ENCODE measurements at regions of chr9 and their contacts with region 1.

Region 1: GRCh38 chr9:21395778-21396717 is 10.8 kb upstream of the IFNA2 start:
- DNase-seq: peak; percentile 39
- H3K4me3 ChIP-seq: peak overlapping the region; percentile 40
- H3K27ac ChIP-seq: no peak overlapping the region
- H3K4me1 ChIP-seq: no peaks in the 10 kb centered on the region
- H3K27me3 ChIP-seq: no peaks in the 10 kb centered on the region
- CTCF ChIP-seq: peak; percentile 75

Region 2: DNA sequence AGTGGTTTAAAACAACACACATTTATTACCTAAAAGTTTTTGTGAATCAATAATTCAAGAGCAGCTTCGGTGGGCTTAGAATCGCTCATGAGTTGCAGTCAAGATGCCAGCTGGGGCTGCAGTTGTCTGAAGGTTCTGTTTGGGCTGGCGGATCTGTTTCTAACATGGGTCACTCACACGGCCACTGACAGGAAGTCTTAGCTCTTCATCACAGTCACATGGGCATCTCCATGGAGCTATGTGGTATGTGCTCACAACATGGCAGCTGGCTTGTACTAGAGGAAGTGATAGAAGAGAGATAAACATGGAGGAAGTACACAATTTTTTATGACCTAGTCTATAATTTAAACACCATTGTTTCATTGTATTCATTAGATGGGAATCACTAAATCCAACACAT is 72.0 kb before region 1 on chr9:
- intact Hi-C with region 1: loop called (anchors 5 kb)
- DNase-seq: no peak
- H3K4me3 ChIP-seq: no peak overlapping the region
- H3K27ac ChIP-seq: no peak overlapping the region
- H3K4me1 ChIP-seq: no peaks in the 10 kb centered on the region
- H3K27me3 ChIP-seq: no peaks in the 10 kb centered on the region
- CTCF ChIP-seq: no peak